Transverse colon (tissue), 4 donors: ENCODE measurements at regions of chr10 and their contacts with region 1.

Region 1: GRCh38 chr10:102721954-102722353 is 7.5 kb downstream of the SFXN2 start:
- DNase-seq: no peak
- H3K4me3 ChIP-seq: no peak overlapping the region
- H3K27ac ChIP-seq: no peak overlapping the region
- H3K4me1 ChIP-seq: no peaks in the 10 kb centered on the region
- H3K27me3 ChIP-seq: no peaks in the 10 kb centered on the region
- CTCF ChIP-seq: no peak
- EP300 ChIP-seq: no peak
- POLR2A ChIP-seq: no peak

Region 2: GRCh38 chr10:102503281-102504220 is 218.4 kb before region 1 on chr10 and contains the start of gene SUFU:
- in situ Hi-C with region 1: no loop called
- intact Hi-C with region 1: loop called (anchors 2 kb)
- DNase-seq: peak; percentile 99
- H3K4me3 ChIP-seq: peak within 1 kb of the TSS; percentile 86 to 100 (median 93)
- H3K27ac ChIP-seq: peak within 1 kb of the TSS; percentile 93 to 99 (median 95)
- H3K4me1 ChIP-seq: peaks cover 10 to 52% (median 37%) of the 10 kb centered on the region in 4 donors
- H3K27me3 ChIP-seq: no peaks in the 10 kb centered on the region
- CTCF ChIP-seq: peak; percentile 89 to 93 (median 89)
- EP300 ChIP-seq: no peak
- POLR2A ChIP-seq: peak; percentile 55
- total RNA-seq, gene SUFU: 5.4 to 13.8 (median 6.6) TPM